ENCODE measurements at regions of chr2 and their contacts with region 1.

Region 1: GRCh38 chr2:241508240-241509154 is at the start of gene STK25:
- DNase-seq: peak; percentile 99
- ATAC-seq: peak; percentile 96
- H3K4me3 Mint-ChIP-seq: peak within 1 kb of the TSS; percentile 79
- H3K27ac Mint-ChIP-seq: peak within 1 kb of the TSS; percentile 58
- H3K4me1 Mint-ChIP-seq: peaks cover 19% of the 10 kb centered on the region
- H3K27me3 Mint-ChIP-seq: peaks cover 3% of the 10 kb centered on the region
- total RNA-seq, gene STK25: 93.5 to 123 TPM

Region 2: GRCh38 chr2:240832205-240832727 is 676.2 kb before region 1 on chr2:
- CTCF ChIA-PET with region 1: no interaction called
- POLR2A ChIA-PET with region 1: no interaction called
- intact Hi-C with region 1: loop called (anchors 1 kb)
- DNase-seq: peak; percentile 98
- ATAC-seq: peak; percentile 96
- H3K4me3 Mint-ChIP-seq: peak overlapping the region; percentile 63
- H3K27ac Mint-ChIP-seq: no peak overlapping the region
- H3K4me1 Mint-ChIP-seq: peaks cover 2% of the 10 kb centered on the region
- H3K27me3 Mint-ChIP-seq: peaks cover 19% of the 10 kb centered on the region

Region 3: GRCh38 chr2:241271641-241272297 is 236.7 kb before region 1 on chr2:
- CTCF ChIA-PET with region 1: no interaction called
- POLR2A ChIA-PET with region 1: no interaction called
- intact Hi-C with region 1: loop called in 1 of 2 experiments (anchors 1 kb)
- DNase-seq: peak; percentile 72
- ATAC-seq: peak; percentile 59
- H3K4me3 Mint-ChIP-seq: peak overlapping the region; percentile 77
- H3K27ac Mint-ChIP-seq: peak overlapping the region; percentile 89
- H3K4me1 Mint-ChIP-seq: peaks cover 46% of the 10 kb centered on the region
- H3K27me3 Mint-ChIP-seq: no peaks in the 10 kb centered on the region

Region 4: DNA sequence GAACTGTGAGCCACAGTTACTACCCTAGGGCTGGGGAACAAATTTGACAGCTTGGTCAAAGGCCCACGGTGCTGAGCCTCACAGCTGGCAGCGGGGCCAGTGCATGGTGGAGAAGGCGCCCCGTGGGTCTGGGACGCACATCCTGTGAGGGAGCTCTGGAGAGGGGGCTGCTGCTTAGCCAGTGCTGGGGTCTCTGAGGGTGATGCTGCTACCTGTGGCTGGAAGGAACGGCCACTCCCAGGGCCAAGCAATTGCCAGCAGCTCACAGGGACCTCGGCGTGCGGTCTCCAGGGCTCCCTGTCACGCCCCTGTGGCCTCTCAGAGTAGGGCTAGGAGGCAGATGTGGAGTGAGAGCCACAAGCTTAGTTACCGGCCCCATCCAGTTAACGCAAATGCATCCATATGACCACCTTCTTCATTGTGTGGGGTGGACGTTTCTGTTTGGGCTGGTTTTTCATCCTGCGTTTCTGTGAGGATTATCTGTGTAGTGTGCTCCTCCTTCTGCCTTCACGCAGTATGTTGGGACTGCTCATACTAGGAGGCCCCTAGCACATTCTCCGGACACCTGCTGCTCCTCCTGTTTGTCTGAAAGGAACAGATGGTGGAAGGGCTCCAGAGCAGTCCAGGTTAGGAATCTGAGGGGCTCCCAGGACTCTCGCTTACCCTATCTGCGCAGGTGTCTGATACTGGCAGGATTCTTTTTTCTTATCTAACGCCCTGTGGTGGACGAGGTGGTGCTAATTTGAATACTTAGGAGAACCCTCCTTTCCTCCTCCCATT is 26.1 kb before region 1 on chr2:
- CTCF ChIA-PET with region 1: no interaction called
- POLR2A ChIA-PET with region 1: no interaction called
- intact Hi-C with region 1: no loop called
- DNase-seq: no peak
- ATAC-seq: no peak
- H3K4me3 Mint-ChIP-seq: no peak overlapping the region
- H3K27ac Mint-ChIP-seq: no peak overlapping the region
- H3K4me1 Mint-ChIP-seq: no peaks in the 10 kb centered on the region
- H3K27me3 Mint-ChIP-seq: no peaks in the 10 kb centered on the region

Region 5: GRCh38 chr2:241609859-241610793 is 101.6 kb after region 1 on chr2:
- CTCF ChIA-PET with region 1: no interaction called
- POLR2A ChIA-PET with region 1: no interaction called
- intact Hi-C with region 1: loop called in 1 of 2 experiments (anchors 1 kb)
- DNase-seq: peak; percentile 96
- ATAC-seq: peak; percentile 100
- H3K4me3 Mint-ChIP-seq: peak overlapping the region; percentile 48
- H3K27ac Mint-ChIP-seq: peak overlapping the region; percentile 67
- H3K4me1 Mint-ChIP-seq: peaks cover 14% of the 10 kb centered on the region
- H3K27me3 Mint-ChIP-seq: no peaks in the 10 kb centered on the region

Region 6: GRCh38 chr2:241686649-241687425 is 178.3 kb after region 1 on chr2 and contains the start of gene DTYMK:
- CTCF ChIA-PET with region 1: no interaction called
- POLR2A ChIA-PET with region 1: no interaction called
- intact Hi-C with region 1: loop called in 1 of 2 experiments (anchors 1 kb)
- DNase-seq: peak; percentile 98
- ATAC-seq: peak; percentile 96
- H3K4me3 Mint-ChIP-seq: peak within 1 kb of the TSS; percentile 98
- H3K27ac Mint-ChIP-seq: peak within 1 kb of the TSS; percentile 96
- H3K4me1 Mint-ChIP-seq: peaks cover 32% of the 10 kb centered on the region
- H3K27me3 Mint-ChIP-seq: no peaks in the 10 kb centered on the region
- total RNA-seq, gene DTYMK: 79.8 to 93.1 TPM

Region 7: GRCh38 chr2:241708879-241709278 is 200.4 kb after region 1 on chr2:
- CTCF ChIA-PET with region 1: no interaction called
- POLR2A ChIA-PET with region 1: no interaction called
- intact Hi-C with region 1: no loop called
- DNase-seq: no peak
- ATAC-seq: no peak
- H3K4me3 Mint-ChIP-seq: no peak overlapping the region
- H3K27ac Mint-ChIP-seq: no peak overlapping the region
- H3K4me1 Mint-ChIP-seq: peaks cover 3% of the 10 kb centered on the region
- H3K27me3 Mint-ChIP-seq: no peaks in the 10 kb centered on the region

Region 8: DNA sequence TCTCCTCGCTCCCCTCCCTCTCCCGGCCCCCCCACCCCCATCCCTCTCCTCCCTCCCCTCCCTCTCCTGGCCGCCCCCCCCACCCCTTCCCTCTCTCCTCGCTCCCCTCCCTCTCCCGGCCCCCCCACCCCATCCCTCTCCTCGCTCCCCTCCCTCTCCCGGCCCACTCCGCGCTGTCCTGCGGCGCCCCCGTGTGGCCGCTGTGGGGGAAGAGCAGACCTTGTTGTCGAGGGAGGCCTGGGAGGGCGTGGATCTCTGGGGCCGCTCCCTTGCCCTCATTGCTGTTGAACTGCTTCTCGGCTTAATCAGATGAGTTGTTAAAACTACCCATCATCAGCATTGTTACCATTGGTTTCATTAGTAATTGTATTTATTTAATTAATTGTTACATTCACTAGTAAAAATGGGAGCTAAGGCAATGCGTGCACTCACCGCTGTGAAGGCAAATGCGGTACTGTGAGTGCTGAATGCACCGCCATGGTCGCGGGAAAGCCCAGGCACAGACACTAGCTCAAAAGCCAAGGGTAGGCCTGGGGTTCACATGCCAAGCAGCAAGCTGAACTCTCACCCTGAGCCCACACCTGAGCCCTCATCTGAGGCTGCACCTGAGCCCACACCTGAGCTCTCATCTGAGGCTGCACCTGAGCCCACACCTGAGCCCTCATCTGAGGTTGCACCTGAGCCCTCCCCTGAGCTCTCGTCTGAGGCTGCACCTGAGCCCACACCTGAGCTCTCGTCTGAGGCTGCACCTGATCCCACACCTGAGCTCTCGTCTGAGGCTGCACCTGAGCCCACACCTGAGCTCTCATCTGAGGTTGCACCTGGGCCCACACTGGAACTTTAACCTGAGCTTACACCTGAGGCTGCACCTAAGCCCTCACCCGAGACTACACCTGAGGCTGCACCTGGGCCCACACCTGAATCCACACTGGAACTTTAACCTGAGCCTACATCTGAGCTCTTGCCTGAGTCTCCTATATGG is 369.8 kb after region 1 on chr2:
- CTCF ChIA-PET with region 1: no interaction called
- POLR2A ChIA-PET with region 1: no interaction called
- intact Hi-C with region 1: loop called in 1 of 2 experiments (anchors 1 kb)
- DNase-seq: peak; percentile 88
- ATAC-seq: peak; percentile 21
- H3K4me3 Mint-ChIP-seq: no peak overlapping the region
- H3K27ac Mint-ChIP-seq: no peak overlapping the region
- H3K4me1 Mint-ChIP-seq: peaks cover 26% of the 10 kb centered on the region
- H3K27me3 Mint-ChIP-seq: no peaks in the 10 kb centered on the region